ENCODE measurements at regions of chr5 and their contacts with region 1.

Region 1: DNA sequence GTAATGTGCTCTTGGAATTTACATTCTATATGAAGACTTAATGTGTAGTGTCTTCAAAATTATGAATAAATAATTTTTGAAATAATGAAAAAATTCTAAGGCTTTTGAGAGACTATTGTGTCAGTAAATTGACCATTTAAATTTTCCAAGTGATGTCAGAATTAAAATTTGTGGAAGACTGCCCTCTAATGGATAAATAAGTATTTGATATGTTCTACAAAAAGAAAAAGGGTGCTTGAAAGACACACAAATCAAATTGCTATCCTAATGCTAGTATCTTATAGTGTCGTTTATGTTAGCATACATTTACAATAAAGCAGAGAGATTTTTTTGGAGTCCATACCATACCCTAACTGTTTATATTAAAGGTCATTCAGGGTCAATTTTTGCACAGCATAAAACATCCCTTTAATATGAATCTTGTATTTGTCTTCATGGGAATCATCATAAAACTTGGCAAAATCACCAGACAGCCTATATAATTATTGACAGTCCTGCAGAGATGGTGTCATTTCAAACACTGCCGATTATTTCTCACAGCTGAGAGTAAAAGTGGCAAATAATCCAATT is 120.8 kb upstream of the SLC27A6 start:
- DNase-seq: no peak
- ATAC-seq: no peak

Region 2: GRCh38 chr5:128667152-128667551 is 177.3 kb before region 1 on chr5:
- intact Hi-C with region 1: loop called (anchors 2 kb)
- DNase-seq: no peak
- ATAC-seq: no peak

Region 3: DNA sequence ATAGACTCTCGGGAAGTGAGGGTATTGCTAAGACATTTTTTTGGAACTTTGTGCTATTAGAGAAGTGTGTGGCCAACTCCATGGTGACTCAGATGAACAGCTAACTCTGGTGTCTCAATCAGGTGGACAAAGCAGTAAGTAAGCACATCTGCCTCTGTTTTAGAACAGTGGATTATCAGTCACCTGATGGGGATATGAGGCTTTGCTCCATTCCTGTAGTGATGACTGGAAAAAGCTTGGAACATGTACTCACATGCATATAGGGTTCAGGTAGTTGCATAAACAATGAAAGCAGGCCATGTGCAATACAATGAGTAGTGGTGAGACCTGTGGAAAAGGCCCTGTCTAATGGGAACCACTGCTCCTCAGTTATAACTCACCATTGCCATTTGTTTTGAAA is 138.2 kb before region 1 on chr5:
- intact Hi-C with region 1: no loop called
- DNase-seq: no peak
- ATAC-seq: no peak